BJ (cell line): ENCODE measurements at regions of chr1 and their contacts with region 1.

Region 1: GRCh38 chr1:117059678-117060440 is at the start of gene TTF2:
- DNase-seq: peak; percentile 93
- H3K4me3 ChIP-seq: peak within 1 kb of the TSS; percentile 78
- H3K27me3 ChIP-seq: no peaks in the 10 kb centered on the region
- CTCF ChIP-seq: peak; percentile 29; the same call in 1 of the 2 replicates
- polyA plus RNA-seq, gene TTF2: 8.9 and 10.1 TPM in 2 replicates

Region 2: GRCh38 chr1:116724765-116725375 is 335.0 kb before region 1 on chr1:
- CTCF ChIA-PET with region 1: interaction called, 11 read pairs
- POLR2A ChIA-PET with region 1: no interaction called
- DNase-seq: no peak
- H3K4me3 ChIP-seq: no peak overlapping the region
- H3K27me3 ChIP-seq: peaks cover 1% of the 10 kb centered on the region; the same call in 1 of the 2 replicates
- CTCF ChIP-seq: peak; percentile 82

Region 3: GRCh38 chr1:116853670-116854402 is 206.0 kb before region 1 on chr1:
- CTCF ChIA-PET with region 1: no interaction called
- POLR2A ChIA-PET with region 1: no interaction called
- DNase-seq: no peak
- H3K4me3 ChIP-seq: no peak overlapping the region
- H3K27me3 ChIP-seq: no peaks in the 10 kb centered on the region
- CTCF ChIP-seq: no peak

Region 4: DNA sequence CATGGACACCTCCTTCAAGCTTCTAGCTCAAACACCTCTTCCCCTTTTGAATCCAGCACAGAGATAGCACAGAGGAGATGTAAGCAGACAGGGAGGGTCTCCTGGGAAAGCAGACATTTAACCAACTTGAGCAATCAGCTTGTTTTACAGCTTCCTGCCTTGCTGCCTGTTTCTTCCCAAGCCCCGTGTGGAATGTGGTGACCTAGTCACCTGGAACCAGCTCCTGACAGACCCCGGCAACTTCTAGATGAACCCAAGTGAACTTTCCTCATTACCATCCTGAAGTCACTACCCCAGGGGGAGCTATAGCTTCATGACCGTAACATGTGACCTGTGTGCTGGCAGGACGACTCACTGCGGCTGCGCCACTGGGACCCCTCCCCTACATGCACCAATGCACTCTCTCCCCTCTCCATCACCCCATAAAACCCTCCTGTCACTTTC is 23.8 kb before region 1 on chr1:
- CTCF ChIA-PET with region 1: no interaction called
- POLR2A ChIA-PET with region 1: no interaction called
- DNase-seq: no peak
- H3K4me3 ChIP-seq: no peak overlapping the region
- H3K27me3 ChIP-seq: peaks cover 2% of the 10 kb centered on the region; the same call in 1 of the 2 replicates
- CTCF ChIP-seq: no peak

Region 5: GRCh38 chr1:117237696-117238381 is 178.0 kb after region 1 on chr1:
- CTCF ChIA-PET with region 1: no interaction called
- POLR2A ChIA-PET with region 1: no interaction called
- DNase-seq: no peak
- H3K4me3 ChIP-seq: no peak overlapping the region
- H3K27me3 ChIP-seq: 0 out of 2 replicates have a peak, but pooled peaks cover 2% of the 10 kb centered on the region
- CTCF ChIP-seq: no peak